ENCODE measurements at regions of chr9 and their contacts with region 1.

Region 1: DNA sequence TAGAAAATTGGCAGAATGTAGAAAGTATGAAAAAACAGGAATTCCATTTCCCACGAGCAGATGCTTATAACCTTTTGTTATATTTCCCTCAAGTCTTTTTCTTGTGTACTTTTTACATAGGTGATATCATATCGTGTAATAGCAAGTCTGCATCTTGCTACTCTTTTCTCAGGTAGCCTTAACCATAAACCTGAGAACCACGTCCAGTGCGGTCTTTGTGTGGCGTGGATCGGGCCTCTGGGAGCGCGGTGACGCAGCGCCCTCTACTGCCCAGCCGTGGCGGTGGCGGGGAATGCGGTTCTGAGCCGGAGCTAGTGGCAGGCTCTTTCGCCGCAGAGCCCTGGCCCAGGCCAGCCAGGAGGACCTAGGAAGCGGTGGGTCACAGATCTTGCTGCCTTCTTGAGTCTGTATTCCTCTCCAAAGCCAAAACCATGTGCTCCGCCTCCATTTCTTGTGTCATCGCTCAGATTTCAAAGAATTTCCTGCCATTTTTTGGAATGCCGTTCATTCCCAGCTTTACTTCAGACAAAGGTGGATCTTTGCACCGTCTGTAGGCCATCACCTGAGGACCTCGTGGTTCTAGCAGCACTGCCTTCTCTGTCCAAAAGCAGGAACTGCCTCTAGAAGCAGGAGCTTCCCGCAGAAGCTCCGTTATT is 71.9 kb downstream of the MVB12B start:
- DNase-seq: peak; percentile 78
- ATAC-seq: peak; percentile 51
- H3K4me3 ChIP-seq: no peak overlapping the region
- H3K4me3 Mint-ChIP-seq: peak overlapping the region; percentile 26
- H3K27ac ChIP-seq: no peak overlapping the region
- H3K27ac Mint-ChIP-seq: no peak overlapping the region
- H3K4me1 ChIP-seq: peaks cover 13 to 16% of the 10 kb centered on the region in 2 donors
- H3K4me1 Mint-ChIP-seq: peaks cover 27% of the 10 kb centered on the region
- H3K27me3 ChIP-seq: no peaks in the 10 kb centered on the region
- H3K27me3 Mint-ChIP-seq: no peaks in the 10 kb centered on the region
- CTCF ChIP-seq: peak; percentile 96

Region 2: DNA sequence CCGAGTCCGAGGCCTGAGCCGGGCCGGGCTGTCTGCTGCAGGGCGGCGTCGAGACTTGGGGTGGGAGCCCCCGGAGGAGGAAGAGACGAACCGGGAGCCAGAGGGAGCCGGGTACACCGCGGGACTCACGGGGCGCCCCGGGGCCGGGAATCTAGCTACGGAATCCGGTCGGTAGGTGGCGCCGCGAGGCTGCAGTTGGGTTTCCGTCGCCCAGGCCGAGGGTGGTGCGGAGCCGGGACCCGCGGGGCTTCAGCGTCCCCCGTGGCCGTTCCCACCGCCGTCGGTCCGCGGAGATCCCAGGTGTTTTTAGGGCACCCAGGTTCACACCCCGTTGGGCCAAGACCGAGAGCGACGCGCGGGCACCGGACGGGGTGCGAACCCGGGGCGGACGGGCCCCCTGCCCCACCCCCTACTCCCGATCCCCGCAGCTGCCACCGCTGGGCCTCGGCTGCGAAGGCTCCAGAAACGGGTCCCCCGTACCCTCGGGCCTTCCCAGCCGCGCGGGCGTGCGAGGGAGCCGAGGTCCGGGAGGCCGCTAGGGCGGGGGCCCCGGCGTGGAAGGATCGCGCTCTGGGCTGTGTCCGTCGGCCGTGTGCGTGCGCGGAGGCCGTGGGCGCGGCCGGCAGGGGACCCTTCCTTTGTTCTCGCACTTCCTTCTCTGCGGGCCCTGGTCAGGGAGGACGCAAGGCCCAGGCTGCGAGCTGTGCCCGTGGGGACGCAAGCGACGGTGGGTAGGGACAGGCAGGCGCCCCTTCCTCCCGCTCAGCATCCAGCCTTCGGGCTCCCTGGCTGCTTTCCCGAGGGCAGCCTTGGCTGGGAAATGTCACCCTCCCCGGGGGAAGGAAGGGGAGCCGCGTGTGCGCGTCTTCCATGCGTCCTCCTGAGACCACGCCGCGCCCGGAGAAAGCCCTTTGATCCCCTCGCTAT is 990.3 kb before region 1 on chr9:
- CTCF ChIA-PET with region 1: interaction called, 24 read pairs
- POLR2A ChIA-PET with region 1: no interaction called
- intact Hi-C with region 1: loop called (anchors 2 kb)
- DNase-seq: peak; percentile 87
- ATAC-seq: peak; percentile 81
- H3K4me3 ChIP-seq: peak overlapping the region; percentile 5 to 68 (median 51)
- H3K4me3 Mint-ChIP-seq: peak overlapping the region; percentile 80
- H3K27ac ChIP-seq: peak overlapping the region in 1 of 2 donors; percentile 15
- H3K27ac Mint-ChIP-seq: no peak overlapping the region
- H3K4me1 ChIP-seq: peaks cover 10 to 19% of the 10 kb centered on the region in 2 donors
- H3K4me1 Mint-ChIP-seq: peaks cover 16% of the 10 kb centered on the region
- H3K27me3 ChIP-seq: peaks cover 0 to 33% (median 9%) of the 10 kb centered on the region in 4 experiments
- H3K27me3 Mint-ChIP-seq: peaks cover 23% of the 10 kb centered on the region
- CTCF ChIP-seq: peak; percentile 93

Region 3: DNA sequence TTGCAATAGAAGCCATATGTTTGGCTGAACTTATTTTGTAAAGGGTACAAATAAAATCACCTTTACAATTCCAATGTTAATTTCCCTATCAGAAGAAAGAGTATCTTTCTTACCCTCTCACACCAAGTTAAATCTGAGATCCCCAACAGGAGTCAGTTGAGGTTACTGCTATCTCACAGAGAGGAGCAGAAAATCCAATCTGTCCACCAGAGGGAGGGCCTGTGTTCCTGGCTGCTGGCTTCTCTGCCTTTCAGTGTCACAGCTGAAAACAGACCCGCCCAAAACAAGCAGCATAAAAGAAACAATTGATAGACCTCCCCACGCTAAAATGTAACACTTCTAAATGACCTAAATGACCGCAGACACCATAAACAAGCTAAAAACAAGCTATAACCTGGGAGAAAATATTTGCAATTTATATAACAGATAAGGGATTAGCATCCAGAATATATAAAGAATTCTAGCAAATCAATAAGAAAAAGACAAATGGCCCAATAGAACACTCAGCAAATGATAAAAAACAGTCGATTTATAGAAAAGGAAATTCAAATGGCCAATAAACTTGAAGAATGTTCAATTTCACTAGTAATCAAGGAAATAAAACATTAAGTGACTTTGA is 96.4 kb before region 1 on chr9:
- CTCF ChIA-PET with region 1: interaction called, 54 read pairs
- POLR2A ChIA-PET with region 1: no interaction called
- intact Hi-C with region 1: loop called (anchors 1 kb)
- DNase-seq: peak; percentile 66
- ATAC-seq: peak; percentile 69
- H3K4me3 ChIP-seq: no peak overlapping the region
- H3K4me3 Mint-ChIP-seq: no peak overlapping the region
- H3K27ac ChIP-seq: no peak overlapping the region
- H3K27ac Mint-ChIP-seq: no peak overlapping the region
- H3K4me1 ChIP-seq: no peaks in the 10 kb centered on the region
- H3K4me1 Mint-ChIP-seq: no peaks in the 10 kb centered on the region
- H3K27me3 ChIP-seq: peaks cover 0 to 5% (median 0%) of the 10 kb centered on the region in 4 experiments
- H3K27me3 Mint-ChIP-seq: peaks cover 11% of the 10 kb centered on the region
- CTCF ChIP-seq: peak; percentile 62

Region 4: GRCh38 chr9:126326228-126327005 is 72.1 kb before region 1 on chr9 and contains the start of gene MVB12B:
- CTCF ChIA-PET with region 1: interaction called, 85 read pairs
- POLR2A ChIA-PET with region 1: no interaction called
- intact Hi-C with region 1: no loop called
- DNase-seq: peak; percentile 76
- ATAC-seq: peak; percentile 88
- H3K4me3 ChIP-seq: peak within 1 kb of the TSS in 4 of 5 experiments; percentile 37 to 56 (median 50)
- H3K4me3 Mint-ChIP-seq: peak within 1 kb of the TSS; percentile 86
- H3K27ac ChIP-seq: no peak within 1 kb of the TSS
- H3K27ac Mint-ChIP-seq: peak within 1 kb of the TSS; percentile 79
- H3K4me1 ChIP-seq: peaks cover 10 to 14% of the 10 kb centered on the region in 2 donors
- H3K4me1 Mint-ChIP-seq: peaks cover 18% of the 10 kb centered on the region
- H3K27me3 ChIP-seq: peaks cover 0 to 10% (median 0%) of the 10 kb centered on the region in 4 experiments
- H3K27me3 Mint-ChIP-seq: peaks cover 21% of the 10 kb centered on the region
- CTCF ChIP-seq: no peak
- total RNA-seq, gene MVB12B: 9.0 and 9.8 TPM in 2 replicates

Region 5: GRCh38 chr9:126423142-126423915 is 24.8 kb after region 1 on chr9:
- CTCF ChIA-PET with region 1: interaction called, 12 read pairs
- POLR2A ChIA-PET with region 1: no interaction called
- intact Hi-C with region 1: no loop called
- DNase-seq: no peak
- ATAC-seq: no peak
- H3K4me3 ChIP-seq: no peak overlapping the region
- H3K4me3 Mint-ChIP-seq: no peak overlapping the region
- H3K27ac ChIP-seq: no peak overlapping the region
- H3K27ac Mint-ChIP-seq: no peak overlapping the region
- H3K4me1 ChIP-seq: peaks cover under 1 to 4% of the 10 kb centered on the region in 2 donors
- H3K4me1 Mint-ChIP-seq: peaks cover 2% of the 10 kb centered on the region
- H3K27me3 ChIP-seq: no peaks in the 10 kb centered on the region
- H3K27me3 Mint-ChIP-seq: peaks cover 10% of the 10 kb centered on the region
- CTCF ChIP-seq: no peak

Region 6: GRCh38 chr9:126448865-126449537 is 50.5 kb after region 1 on chr9:
- CTCF ChIA-PET with region 1: no interaction called
- POLR2A ChIA-PET with region 1: no interaction called
- intact Hi-C with region 1: no loop called
- DNase-seq: no peak
- ATAC-seq: no peak
- H3K4me3 ChIP-seq: no peak overlapping the region
- H3K4me3 Mint-ChIP-seq: no peak overlapping the region
- H3K27ac ChIP-seq: no peak overlapping the region
- H3K27ac Mint-ChIP-seq: no peak overlapping the region
- H3K4me1 ChIP-seq: no peaks in the 10 kb centered on the region
- H3K4me1 Mint-ChIP-seq: no peaks in the 10 kb centered on the region
- H3K27me3 ChIP-seq: no peaks in the 10 kb centered on the region
- H3K27me3 Mint-ChIP-seq: no peaks in the 10 kb centered on the region
- CTCF ChIP-seq: no peak

Region 7: DNA sequence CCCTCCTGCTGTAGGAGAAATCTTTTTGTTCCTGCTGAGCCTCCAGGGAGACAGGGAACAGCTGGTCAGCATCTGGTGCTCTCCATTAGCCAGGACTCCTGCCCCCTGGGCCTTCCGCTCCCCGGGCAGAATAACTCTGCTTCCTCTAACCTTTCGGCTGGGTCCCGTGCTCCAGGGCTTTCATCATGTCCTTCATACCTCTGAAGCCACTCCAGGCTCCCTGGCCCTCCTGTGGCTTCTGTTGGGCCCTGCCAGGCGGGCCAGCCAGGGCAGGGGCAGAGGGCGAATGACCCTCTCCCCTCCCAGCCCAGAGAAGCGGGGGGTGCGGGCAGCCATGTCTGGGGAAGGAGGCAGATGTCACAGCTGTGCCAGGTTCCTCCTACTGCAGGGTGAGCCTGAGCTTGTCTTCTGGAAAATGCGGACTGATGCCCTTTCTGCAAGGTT is 133.5 kb after region 1 on chr9:
- CTCF ChIA-PET with region 1: no interaction called
- POLR2A ChIA-PET with region 1: no interaction called
- intact Hi-C with region 1: no loop called
- DNase-seq: no peak
- ATAC-seq: no peak
- H3K4me3 ChIP-seq: no peak overlapping the region
- H3K4me3 Mint-ChIP-seq: peak overlapping the region; percentile 79
- H3K27ac ChIP-seq: peak overlapping the region in 1 of 2 donors; percentile 18
- H3K27ac Mint-ChIP-seq: peak overlapping the region; percentile 91
- H3K4me1 ChIP-seq: peaks cover 43 to 58% of the 10 kb centered on the region in 2 donors
- H3K4me1 Mint-ChIP-seq: peaks cover 48% of the 10 kb centered on the region
- H3K27me3 ChIP-seq: no peaks in the 10 kb centered on the region
- H3K27me3 Mint-ChIP-seq: no peaks in the 10 kb centered on the region
- CTCF ChIP-seq: no peak

Region 8: GRCh38 chr9:128053560-128053959 is 1655.0 kb after region 1 on chr9:
- CTCF ChIA-PET with region 1: no interaction called
- POLR2A ChIA-PET with region 1: no interaction called
- intact Hi-C with region 1: no loop called
- DNase-seq: no peak
- ATAC-seq: no peak
- H3K4me3 ChIP-seq: no peak overlapping the region
- H3K4me3 Mint-ChIP-seq: no peak overlapping the region
- H3K27ac ChIP-seq: no peak overlapping the region
- H3K27ac Mint-ChIP-seq: no peak overlapping the region
- H3K4me1 ChIP-seq: no peaks in the 10 kb centered on the region
- H3K4me1 Mint-ChIP-seq: peaks cover 1% of the 10 kb centered on the region
- H3K27me3 ChIP-seq: no peaks in the 10 kb centered on the region
- H3K27me3 Mint-ChIP-seq: no peaks in the 10 kb centered on the region
- CTCF ChIP-seq: no peak

Measured in B cell (primary cell).